Activated T-helper 2 cell treated with anti-CD3 and anti-CD28 coated beads, Interferon-gamma antibody, Interleukin-2, Interleukin-4, amounts not matched to agents 10 μg/mL and 5 μg/mL and 100 μg/mL, durations not matched to agents 14 hours and 24 hours and 36 hours (primary cell): ENCODE measurements at regions of chr6 and their contacts with region 1.

Region 1: DNA sequence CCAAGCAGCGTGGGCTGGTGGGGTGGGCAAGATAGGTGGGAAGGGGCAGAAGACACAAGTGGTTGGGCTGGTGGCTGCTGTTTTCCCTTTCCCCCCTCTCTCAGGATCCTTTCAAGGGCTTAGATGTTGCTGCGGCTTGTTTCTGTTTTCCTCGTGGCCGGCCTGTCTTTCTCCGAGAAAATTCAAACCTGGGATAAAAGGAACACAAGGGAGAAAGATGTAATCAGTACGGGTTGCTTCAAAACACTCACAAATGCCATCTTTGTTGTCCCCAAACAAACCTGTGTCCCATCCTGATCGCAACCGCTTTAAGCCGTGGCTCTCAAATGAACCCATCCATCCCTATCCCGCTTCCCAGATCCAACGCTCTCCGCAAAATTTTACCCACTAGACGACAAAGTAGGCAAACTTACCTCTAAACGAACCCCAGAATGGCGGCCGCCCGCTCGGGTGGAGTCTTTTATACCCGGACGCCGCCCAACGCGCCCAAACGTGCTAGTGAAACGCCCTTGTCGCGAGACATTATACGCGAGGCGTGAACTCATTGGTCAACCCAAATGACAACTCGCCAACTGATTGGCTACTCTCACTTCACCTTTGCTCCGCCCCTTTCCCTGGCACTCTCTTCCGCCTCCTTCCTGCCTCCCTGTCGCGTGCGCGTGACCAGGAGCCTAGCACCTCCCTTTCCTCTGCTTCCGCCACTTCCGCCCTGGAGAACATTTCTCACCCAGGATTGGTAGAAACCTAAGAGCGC is at the start of gene PPP1R10:
- DNase-seq: peak; percentile 99
- H3K4me3 Mint-ChIP-seq: peak within 1 kb of the TSS; percentile 96
- H3K27ac Mint-ChIP-seq: peak within 1 kb of the TSS; percentile 98
- H3K4me1 Mint-ChIP-seq: peaks cover 29% of the 10 kb centered on the region
- H3K27me3 Mint-ChIP-seq: peaks cover 3% of the 10 kb centered on the region
- total RNA-seq, gene PPP1R10: 96.7 and 102 TPM in 2 replicates

Region 2: GRCh38 chr6:30326526-30327260 is 290.3 kb before region 1 on chr6 and contains the start of gene TRIM39:
- intact Hi-C with region 1: loop called (anchors 2 kb)
- DNase-seq: peak; percentile 85
- H3K4me3 Mint-ChIP-seq: peak within 1 kb of the TSS; percentile 94
- H3K27ac Mint-ChIP-seq: peak within 1 kb of the TSS; percentile 93
- H3K4me1 Mint-ChIP-seq: peaks cover 47% of the 10 kb centered on the region
- H3K27me3 Mint-ChIP-seq: no peaks in the 10 kb centered on the region
- total RNA-seq, gene TRIM39: 11.2 and 13.0 TPM in 2 replicates

Region 3: DNA sequence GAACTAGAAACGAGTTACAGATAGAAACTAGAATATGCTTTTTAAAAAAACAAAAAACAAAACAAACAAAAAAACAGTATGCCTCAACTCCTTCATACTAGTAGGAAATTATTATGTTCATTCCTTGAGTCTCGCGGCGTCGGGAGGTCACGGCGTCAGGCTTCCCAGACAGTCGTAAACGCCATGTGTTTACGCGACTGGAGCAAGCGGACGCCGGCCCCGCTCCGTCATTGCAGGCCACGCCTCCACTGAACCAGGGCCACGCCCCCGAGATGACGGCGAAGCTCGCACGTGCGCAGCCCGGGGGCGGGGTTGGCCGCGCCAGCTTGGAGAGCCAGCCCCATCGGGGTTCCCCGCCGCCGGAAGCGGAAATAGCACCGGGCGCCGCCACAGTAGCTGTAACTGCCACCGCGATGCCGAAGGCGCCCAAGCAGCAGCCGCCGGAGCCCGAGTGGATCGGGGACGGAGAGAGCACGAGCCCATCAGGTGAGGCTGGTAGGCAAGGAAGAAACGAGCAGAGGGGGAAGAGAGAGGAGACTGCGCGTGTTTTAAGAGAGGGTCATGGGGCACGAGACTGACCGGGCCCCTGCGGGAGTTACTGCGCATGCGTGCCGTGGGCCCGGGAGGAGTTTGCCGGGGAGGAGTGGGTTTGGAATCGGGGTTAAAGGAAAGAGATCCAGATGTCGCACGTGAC is 45.8 kb before region 1 on chr6 and contains the start of gene ABCF1:
- intact Hi-C with region 1: loop called (anchors 1 kb)
- DNase-seq: peak; percentile 99
- H3K4me3 Mint-ChIP-seq: peak within 1 kb of the TSS; percentile 91
- H3K27ac Mint-ChIP-seq: peak within 1 kb of the TSS; percentile 92
- H3K4me1 Mint-ChIP-seq: peaks cover 56% of the 10 kb centered on the region
- H3K27me3 Mint-ChIP-seq: no peaks in the 10 kb centered on the region
- total RNA-seq, gene ABCF1: 102 and 112 TPM in 2 replicates

Region 4: DNA sequence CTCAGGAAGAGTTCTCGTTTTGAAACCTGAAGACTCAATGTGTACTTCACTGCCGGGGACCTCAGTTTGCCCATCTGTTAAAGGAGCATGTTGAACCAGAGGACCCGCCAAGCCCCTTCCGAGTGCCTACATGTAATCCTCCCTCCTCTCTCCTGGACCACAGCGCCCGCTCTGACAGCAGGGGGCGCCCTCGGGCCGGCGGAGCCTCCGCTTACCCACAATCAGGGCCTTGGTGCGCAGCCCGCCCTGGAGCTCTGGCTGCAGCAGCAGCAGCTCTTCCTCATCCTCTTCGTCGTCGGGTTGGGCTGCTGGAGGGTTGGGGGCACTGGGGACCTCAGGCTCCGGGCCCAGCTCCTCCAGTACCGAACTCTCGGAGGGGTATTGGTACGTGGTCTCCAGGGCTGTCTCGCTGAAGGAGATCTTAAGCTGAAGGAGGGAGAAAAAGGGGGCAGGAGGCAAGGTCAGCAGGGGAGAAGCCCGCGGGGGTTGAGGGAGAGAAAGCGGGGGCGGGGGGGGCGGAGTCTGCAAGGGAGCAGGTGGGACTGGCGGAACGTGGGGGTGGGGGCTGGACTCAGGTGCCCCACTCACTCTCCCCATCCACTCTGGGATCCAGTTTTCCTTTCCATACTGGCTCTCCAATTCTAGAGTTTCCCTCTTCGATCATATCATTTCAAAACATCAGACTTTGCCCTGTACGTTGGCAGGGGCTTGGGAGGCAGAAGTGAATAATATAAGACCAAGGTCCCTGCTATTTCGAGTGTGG is 62.2 kb after region 1 on chr6:
- intact Hi-C with region 1: loop called (anchors 1 kb)
- DNase-seq: peak; percentile 86
- H3K4me3 Mint-ChIP-seq: peak overlapping the region; percentile 97
- H3K27ac Mint-ChIP-seq: peak overlapping the region; percentile 75
- H3K4me1 Mint-ChIP-seq: peaks cover 26% of the 10 kb centered on the region
- H3K27me3 Mint-ChIP-seq: no peaks in the 10 kb centered on the region

Region 5: GRCh38 chr6:31541658-31542521 is 924.9 kb after region 1 on chr6 and contains the start of gene DDX39B:
- intact Hi-C with region 1: loop called (anchors 10 kb)
- DNase-seq: peak; percentile 94
- H3K4me3 Mint-ChIP-seq: peak within 1 kb of the TSS; percentile 98
- H3K27ac Mint-ChIP-seq: peak within 1 kb of the TSS; percentile 95
- H3K4me1 Mint-ChIP-seq: peaks cover 42% of the 10 kb centered on the region
- H3K27me3 Mint-ChIP-seq: no peaks in the 10 kb centered on the region
- total RNA-seq, gene DDX39B: 579 and 583 TPM in 2 replicates